CD8-positive, alpha-beta memory T cell (primary cell): ENCODE measurements at regions of chr11 and their contacts with region 1.

Region 1: GRCh38 chr11:45846974-45847910 is at the start of gene CRY2:
- DNase-seq: peak; percentile 97 to 99 (median 99)
- H3K4me3 ChIP-seq: peak within 1 kb of the TSS; percentile 85
- H3K4me3 Mint-ChIP-seq: peak within 1 kb of the TSS; percentile 78 to 94 (median 88)
- H3K27ac ChIP-seq: peak within 1 kb of the TSS; percentile 97
- H3K27ac Mint-ChIP-seq: peak within 1 kb of the TSS; percentile 87 to 99 (median 97)
- H3K4me1 ChIP-seq: peaks cover 42% of the 10 kb centered on the region
- H3K4me1 Mint-ChIP-seq: peaks cover 39 to 69% (median 60%) of the 10 kb centered on the region in 3 donors
- H3K27me3 ChIP-seq: no peaks in the 10 kb centered on the region
- H3K27me3 Mint-ChIP-seq: no peaks in the 10 kb centered on the region
- total RNA-seq, gene CRY2: 16.6 to 17.8 TPM

Region 2: GRCh38 chr11:45778341-45778740 is 68.9 kb before region 1 on chr11:
- CTCF ChIA-PET with region 1: no interaction called
- POLR2A ChIA-PET with region 1: no interaction called
- DNase-seq: no peak
- H3K4me3 ChIP-seq: no peak overlapping the region
- H3K4me3 Mint-ChIP-seq: no peak overlapping the region
- H3K27ac ChIP-seq: no peak overlapping the region
- H3K27ac Mint-ChIP-seq: no peak overlapping the region
- H3K4me1 ChIP-seq: no peaks in the 10 kb centered on the region
- H3K4me1 Mint-ChIP-seq: peaks cover 0 to 1% (median under 1%) of the 10 kb centered on the region in 3 donors
- H3K27me3 ChIP-seq: no peaks in the 10 kb centered on the region
- H3K27me3 Mint-ChIP-seq: peaks cover 0 to 27% of the 10 kb centered on the region in 2 donors

Region 3: GRCh38 chr11:45804761-45805304 is 42.4 kb before region 1 on chr11 and contains the start of gene SLC35C1:
- CTCF ChIA-PET with region 1: interaction called, 5 read pairs
- POLR2A ChIA-PET with region 1: interaction called, 15 read pairs
- DNase-seq: peak; percentile 92 to 96 (median 95)
- H3K4me3 ChIP-seq: peak within 1 kb of the TSS; percentile 83
- H3K4me3 Mint-ChIP-seq: peak within 1 kb of the TSS; percentile 87 to 99 (median 92)
- H3K27ac ChIP-seq: peak within 1 kb of the TSS; percentile 74
- H3K27ac Mint-ChIP-seq: peak within 1 kb of the TSS; percentile 80 to 98 (median 91)
- H3K4me1 ChIP-seq: peaks cover 37% of the 10 kb centered on the region
- H3K4me1 Mint-ChIP-seq: peaks cover 31 to 54% (median 39%) of the 10 kb centered on the region in 3 donors
- H3K27me3 ChIP-seq: no peaks in the 10 kb centered on the region
- H3K27me3 Mint-ChIP-seq: no peaks in the 10 kb centered on the region
- total RNA-seq, gene SLC35C1: 17.7 to 18.1 TPM

Region 4: DNA sequence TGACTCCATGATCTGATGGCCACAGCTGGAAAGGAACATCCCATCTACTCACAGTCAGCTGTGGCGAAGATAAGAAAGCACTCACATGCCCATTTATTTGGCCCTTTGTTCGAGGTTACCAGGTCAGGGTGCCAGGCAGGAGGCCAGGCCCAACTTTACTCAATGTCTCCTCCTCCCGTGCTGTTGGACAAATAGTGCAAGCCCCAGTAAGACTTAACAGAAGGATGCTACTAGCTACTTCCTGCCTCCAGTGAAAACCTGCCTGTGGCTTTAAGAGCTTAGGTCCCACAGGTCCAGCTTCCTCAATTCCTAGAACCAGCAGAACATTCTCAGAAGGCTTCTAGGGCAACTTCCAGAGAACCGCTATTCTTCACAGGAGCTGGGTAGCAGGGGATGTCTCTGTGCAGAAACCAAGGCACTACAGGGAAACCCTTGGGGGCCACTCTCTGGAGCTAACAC is 12.9 kb before region 1 on chr11:
- CTCF ChIA-PET with region 1: interaction called, 10 read pairs
- POLR2A ChIA-PET with region 1: no interaction called
- DNase-seq: no peak
- H3K4me3 ChIP-seq: no peak overlapping the region
- H3K4me3 Mint-ChIP-seq: no peak overlapping the region
- H3K27ac ChIP-seq: no peak overlapping the region
- H3K27ac Mint-ChIP-seq: peak overlapping the region in 2 of 8 donors; percentile 66 to 94
- H3K4me1 ChIP-seq: peaks cover 12% of the 10 kb centered on the region
- H3K4me1 Mint-ChIP-seq: peaks cover 9 to 11% (median 10%) of the 10 kb centered on the region in 3 donors
- H3K27me3 ChIP-seq: no peaks in the 10 kb centered on the region
- H3K27me3 Mint-ChIP-seq: peaks cover 9 to 11% of the 10 kb centered on the region in 2 donors

Region 5: GRCh38 chr11:45982656-45983470 is 135.6 kb after region 1 on chr11:
- CTCF ChIA-PET with region 1: no interaction called
- POLR2A ChIA-PET with region 1: no interaction called
- DNase-seq: no peak
- H3K4me3 ChIP-seq: no peak overlapping the region
- H3K4me3 Mint-ChIP-seq: no peak overlapping the region
- H3K27ac ChIP-seq: no peak overlapping the region
- H3K27ac Mint-ChIP-seq: peak overlapping the region in 5 of 8 donors; percentile 15 to 72 (median 29)
- H3K4me1 ChIP-seq: no peaks in the 10 kb centered on the region
- H3K4me1 Mint-ChIP-seq: peaks cover 26 to 50% (median 40%) of the 10 kb centered on the region in 3 donors
- H3K27me3 ChIP-seq: no peaks in the 10 kb centered on the region
- H3K27me3 Mint-ChIP-seq: no peaks in the 10 kb centered on the region

Region 6: DNA sequence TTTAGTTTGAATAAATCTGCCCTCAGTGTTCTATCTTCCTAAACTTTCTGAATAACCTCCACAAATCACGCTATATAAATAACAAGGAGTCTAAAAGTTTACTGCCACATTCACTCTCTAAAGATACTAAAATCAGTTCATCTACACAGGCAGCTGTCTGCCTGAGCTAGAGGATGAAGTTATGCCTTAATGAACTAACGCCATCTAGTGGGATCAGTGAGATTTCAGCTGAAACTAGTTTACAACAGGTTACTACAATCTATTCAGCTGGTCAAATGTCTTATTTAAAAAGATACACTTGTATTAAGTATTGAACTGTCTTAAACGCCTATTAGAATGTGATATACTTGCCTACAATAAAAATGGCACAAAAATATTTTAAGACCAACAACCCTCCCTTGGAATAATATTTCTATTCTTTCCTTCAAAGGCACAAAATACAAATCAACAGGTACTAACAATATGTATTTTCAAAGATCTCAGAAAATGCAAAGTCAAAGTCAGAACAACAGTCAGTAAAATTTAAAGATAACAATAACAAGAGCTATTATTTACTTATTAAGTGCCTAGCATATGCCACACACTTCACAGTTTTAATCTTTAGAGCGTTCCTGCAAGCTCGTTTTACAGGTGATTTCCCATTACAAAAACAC is 159.3 kb after region 1 on chr11:
- CTCF ChIA-PET with region 1: interaction called, 15 read pairs
- POLR2A ChIA-PET with region 1: no interaction called
- DNase-seq: peak in 3 of 5 donors; percentile 36 to 46 (median 43)
- H3K4me3 ChIP-seq: no peak overlapping the region
- H3K4me3 Mint-ChIP-seq: no peak overlapping the region
- H3K27ac ChIP-seq: no peak overlapping the region
- H3K27ac Mint-ChIP-seq: peak overlapping the region in 4 of 8 donors; percentile 4 to 68 (median 32)
- H3K4me1 ChIP-seq: no peaks in the 10 kb centered on the region
- H3K4me1 Mint-ChIP-seq: peaks cover 6 to 10% (median 7%) of the 10 kb centered on the region in 3 donors
- H3K27me3 ChIP-seq: no peaks in the 10 kb centered on the region
- H3K27me3 Mint-ChIP-seq: no peaks in the 10 kb centered on the region